Activated B cell treated with CpG ODN at 0.5 μM for 24 hours (primary cell): ENCODE measurements at regions of chr13 and their contacts with region 1.

Region 1: GRCh38 chr13:40158218-40158617 is 502.8 kb downstream of the COG6 start:
- DNase-seq: no peak
- ATAC-seq: peak; percentile 45
- H3K4me3 Mint-ChIP-seq: no peak overlapping the region
- H3K27ac Mint-ChIP-seq: no peak overlapping the region
- H3K4me1 Mint-ChIP-seq: peaks cover 17% of the 10 kb centered on the region
- H3K27me3 Mint-ChIP-seq: no peaks in the 10 kb centered on the region
- CTCF ChIP-seq: no peak

Region 2: GRCh38 chr13:40146611-40147117 is 11.6 kb before region 1 on chr13:
- CTCF ChIA-PET with region 1: no interaction called
- POLR2A ChIA-PET with region 1: no interaction called
- intact Hi-C with region 1: loop called (anchors 2 kb)
- DNase-seq: no peak
- ATAC-seq: peak; percentile 26
- H3K4me3 Mint-ChIP-seq: no peak overlapping the region
- H3K27ac Mint-ChIP-seq: no peak overlapping the region
- H3K4me1 Mint-ChIP-seq: peaks cover 38% of the 10 kb centered on the region
- H3K27me3 Mint-ChIP-seq: no peaks in the 10 kb centered on the region
- CTCF ChIP-seq: no peak

Region 3: GRCh38 chr13:40206241-40207000 is 48.2 kb after region 1 on chr13:
- CTCF ChIA-PET with region 1: no interaction called
- POLR2A ChIA-PET with region 1: no interaction called
- intact Hi-C with region 1: loop called (anchors 1 kb)
- DNase-seq: peak; percentile 52
- ATAC-seq: peak; percentile 66
- H3K4me3 Mint-ChIP-seq: peak overlapping the region; percentile 76
- H3K27ac Mint-ChIP-seq: peak overlapping the region; percentile 100
- H3K4me1 Mint-ChIP-seq: peaks cover 72% of the 10 kb centered on the region
- H3K27me3 Mint-ChIP-seq: no peaks in the 10 kb centered on the region
- CTCF ChIP-seq: no peak

Region 4: GRCh38 chr13:40315416-40316064 is 157.3 kb after region 1 on chr13:
- CTCF ChIA-PET with region 1: no interaction called
- POLR2A ChIA-PET with region 1: no interaction called
- intact Hi-C with region 1: no loop called
- DNase-seq: no peak
- ATAC-seq: no peak
- H3K4me3 Mint-ChIP-seq: peak overlapping the region; percentile 49
- H3K27ac Mint-ChIP-seq: no peak overlapping the region
- H3K4me1 Mint-ChIP-seq: peaks cover 36% of the 10 kb centered on the region
- H3K27me3 Mint-ChIP-seq: no peaks in the 10 kb centered on the region
- CTCF ChIP-seq: no peak

Region 5: DNA sequence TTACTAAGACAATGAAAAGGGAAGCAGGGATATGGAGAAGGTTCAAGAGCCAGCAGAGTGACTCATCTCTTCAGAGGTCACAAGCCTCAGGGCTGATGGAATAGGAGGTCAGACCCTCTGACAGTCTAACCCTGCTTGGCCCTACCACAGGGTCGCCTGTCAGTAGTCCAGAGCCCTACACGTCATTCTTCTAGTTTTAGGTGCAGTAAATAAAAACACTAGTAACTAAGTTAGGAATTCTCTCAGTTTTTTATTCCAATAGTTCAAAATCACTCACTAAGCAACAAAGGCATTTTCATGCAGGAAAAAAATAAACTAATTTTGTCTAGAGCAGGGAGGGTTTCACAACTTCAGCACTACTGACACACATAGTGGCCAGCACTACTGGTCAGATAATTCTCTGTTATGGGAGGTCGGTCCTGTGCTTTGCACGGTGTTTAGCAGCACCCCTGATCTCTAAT is 481.0 kb after region 1 on chr13:
- CTCF ChIA-PET with region 1: no interaction called
- POLR2A ChIA-PET with region 1: no interaction called
- intact Hi-C with region 1: no loop called
- DNase-seq: no peak
- ATAC-seq: no peak
- H3K4me3 Mint-ChIP-seq: no peak overlapping the region
- H3K27ac Mint-ChIP-seq: peak overlapping the region; percentile 74
- H3K4me1 Mint-ChIP-seq: peaks cover 92% of the 10 kb centered on the region
- H3K27me3 Mint-ChIP-seq: no peaks in the 10 kb centered on the region
- CTCF ChIP-seq: no peak